ENCODE measurements at regions of chr9 and their contacts with region 1.

Region 1: DNA sequence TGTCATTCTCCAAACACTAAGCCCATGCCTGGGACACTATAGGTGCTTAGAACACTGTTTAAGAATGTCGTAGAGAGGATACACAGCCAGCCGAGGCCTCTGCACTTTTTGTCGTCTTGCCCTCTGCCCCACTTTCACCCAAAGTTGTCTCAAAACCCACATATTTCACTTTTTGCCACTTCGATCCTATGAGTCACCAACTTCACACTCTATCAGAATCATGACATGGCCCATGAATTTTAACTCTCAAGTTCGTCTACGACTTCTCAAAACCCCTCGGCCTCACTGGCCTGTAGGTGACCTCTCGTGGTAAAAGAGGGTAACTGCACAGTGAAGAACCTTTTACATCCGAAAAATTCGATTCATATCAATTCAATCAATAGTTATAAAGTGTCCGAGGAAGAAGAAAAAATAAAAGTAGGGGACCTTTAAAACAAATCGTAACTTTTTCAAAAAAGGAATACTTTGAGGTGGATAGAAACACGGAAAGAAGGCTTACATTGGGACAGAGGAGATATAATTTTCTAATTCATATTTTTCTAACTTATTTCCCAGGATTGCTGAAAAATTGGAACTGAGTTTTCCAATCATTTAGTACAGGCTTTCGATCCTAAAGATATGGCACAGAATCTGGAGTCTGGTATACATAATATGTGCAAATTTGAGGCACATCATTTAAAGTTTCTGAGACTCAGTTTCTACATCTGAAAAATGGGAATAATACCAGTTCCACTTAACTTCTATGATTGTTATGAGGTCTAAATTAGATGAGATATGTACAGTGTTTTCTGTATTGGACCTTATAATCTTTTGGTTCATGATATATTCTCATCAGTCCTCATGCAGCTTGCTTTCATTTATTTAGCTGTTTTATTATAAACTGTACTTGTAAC is 122.6 kb downstream of the APBA1 start:
- DNase-seq: peak in 1 of 2 experiments; percentile 1
- H3K4me3 ChIP-seq: no peak overlapping the region
- H3K4me3 Mint-ChIP-seq: no peak overlapping the region
- H3K27ac Mint-ChIP-seq: no peak overlapping the region
- H3K4me1 ChIP-seq: no peaks in the 10 kb centered on the region
- H3K4me1 Mint-ChIP-seq: no peaks in the 10 kb centered on the region
- H3K27me3 ChIP-seq: no peaks in the 10 kb centered on the region
- H3K27me3 Mint-ChIP-seq: no peaks in the 10 kb centered on the region
- CTCF ChIP-seq: peak; percentile 26 to 44

Region 2: DNA sequence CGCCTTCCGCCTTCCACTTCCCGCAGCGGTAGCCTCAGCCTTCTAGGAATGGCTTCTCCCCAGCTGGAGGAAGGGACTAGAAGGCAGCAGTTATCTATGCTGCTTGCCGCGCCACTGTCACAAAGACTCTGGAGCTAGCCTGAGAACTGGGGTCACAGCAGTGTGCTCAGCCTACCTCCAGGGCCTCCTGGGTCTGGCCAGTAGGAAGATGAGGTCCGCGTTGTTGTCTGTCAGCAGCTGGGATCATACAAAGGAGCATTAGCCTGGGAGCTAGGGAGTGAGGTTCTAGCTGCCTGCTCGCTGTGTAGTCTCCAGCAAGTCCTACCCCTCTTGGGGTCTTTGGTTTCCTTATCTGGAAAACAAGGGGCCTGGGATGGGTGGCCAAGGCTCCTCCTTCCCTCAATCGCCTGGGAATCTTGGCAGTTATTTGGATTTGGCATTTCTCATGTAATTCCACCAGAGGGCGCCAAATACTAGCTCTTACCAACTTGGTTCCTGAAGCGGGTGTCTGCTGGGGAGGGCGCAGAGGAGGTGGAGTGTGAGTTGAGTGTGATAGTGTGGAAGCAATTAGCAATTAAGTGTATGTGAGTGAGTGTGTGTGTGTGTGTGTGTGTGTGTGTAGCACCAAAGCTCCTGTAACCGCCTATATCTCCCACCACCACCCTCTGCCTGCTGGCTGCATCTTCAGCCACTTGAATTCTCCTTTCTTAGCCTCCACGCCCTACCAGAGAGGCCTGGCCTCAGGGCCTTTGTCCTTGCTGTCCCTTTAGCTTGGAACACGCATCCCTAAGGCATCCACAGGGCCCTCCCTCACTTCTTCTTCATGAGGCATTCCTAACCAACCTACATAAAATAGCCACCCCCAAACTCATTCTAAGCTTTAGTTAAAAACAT is 127.4 kb before region 1 on chr9:
- CTCF ChIA-PET with region 1: no interaction called
- POLR2A ChIA-PET with region 1: no interaction called
- intact Hi-C with region 1: loop called (anchors 2 kb)
- DNase-seq: peak; percentile 17 to 33
- H3K4me3 ChIP-seq: no peak overlapping the region
- H3K4me3 Mint-ChIP-seq: no peak overlapping the region
- H3K27ac Mint-ChIP-seq: no peak overlapping the region
- H3K4me1 ChIP-seq: no peaks in the 10 kb centered on the region
- H3K4me1 Mint-ChIP-seq: no peaks in the 10 kb centered on the region
- H3K27me3 ChIP-seq: no peaks in the 10 kb centered on the region
- H3K27me3 Mint-ChIP-seq: no peaks in the 10 kb centered on the region
- CTCF ChIP-seq: peak; percentile 37 to 43

Measured in Caco-2 (cell line).